ENCODE measurements at regions of chr3 and their contacts with region 1.

Region 1: GRCh38 chr3:100047455-100048141 is 66.7 kb downstream of the FILIP1L start:
- DNase-seq: peak; percentile 22 to 41
- ATAC-seq: peak; percentile 93

Region 2: DNA sequence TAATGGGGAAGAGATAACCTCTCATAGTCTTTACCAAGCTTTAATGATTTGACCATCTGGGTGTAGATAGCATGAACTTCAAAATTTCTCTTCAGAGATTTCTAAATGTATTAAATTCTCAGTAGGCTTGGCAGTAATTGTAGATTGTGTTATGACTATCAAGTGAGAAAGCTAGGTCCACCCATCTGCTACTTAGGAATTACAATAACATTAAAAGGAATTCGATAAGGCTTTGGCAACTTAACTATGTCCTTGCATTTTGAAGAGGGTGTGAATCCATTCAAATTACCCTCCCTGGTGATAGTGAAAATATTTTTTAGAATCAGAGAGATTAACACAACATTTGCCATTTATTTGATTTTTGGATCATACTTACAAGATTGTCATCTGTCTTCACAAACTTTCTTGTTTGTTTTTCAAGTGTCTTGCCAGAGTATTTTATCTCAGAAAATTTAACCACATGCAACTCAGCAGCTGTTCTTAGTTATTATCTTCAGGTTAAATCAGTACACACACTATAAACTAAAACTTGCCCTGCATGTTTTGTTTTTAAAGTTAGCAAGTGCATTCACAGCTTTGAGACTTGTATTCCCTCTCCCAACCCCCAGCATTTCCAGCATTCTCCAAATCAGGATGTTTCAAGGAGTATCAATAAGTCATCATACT is 478.8 kb before region 1 on chr3:
- intact Hi-C with region 1: no loop called
- DNase-seq: no peak
- ATAC-seq: no peak

Region 3: GRCh38 chr3:99789011-99789721 is 258.4 kb before region 1 on chr3:
- intact Hi-C with region 1: no loop called
- DNase-seq: no peak
- ATAC-seq: peak; percentile 65

Region 4: DNA sequence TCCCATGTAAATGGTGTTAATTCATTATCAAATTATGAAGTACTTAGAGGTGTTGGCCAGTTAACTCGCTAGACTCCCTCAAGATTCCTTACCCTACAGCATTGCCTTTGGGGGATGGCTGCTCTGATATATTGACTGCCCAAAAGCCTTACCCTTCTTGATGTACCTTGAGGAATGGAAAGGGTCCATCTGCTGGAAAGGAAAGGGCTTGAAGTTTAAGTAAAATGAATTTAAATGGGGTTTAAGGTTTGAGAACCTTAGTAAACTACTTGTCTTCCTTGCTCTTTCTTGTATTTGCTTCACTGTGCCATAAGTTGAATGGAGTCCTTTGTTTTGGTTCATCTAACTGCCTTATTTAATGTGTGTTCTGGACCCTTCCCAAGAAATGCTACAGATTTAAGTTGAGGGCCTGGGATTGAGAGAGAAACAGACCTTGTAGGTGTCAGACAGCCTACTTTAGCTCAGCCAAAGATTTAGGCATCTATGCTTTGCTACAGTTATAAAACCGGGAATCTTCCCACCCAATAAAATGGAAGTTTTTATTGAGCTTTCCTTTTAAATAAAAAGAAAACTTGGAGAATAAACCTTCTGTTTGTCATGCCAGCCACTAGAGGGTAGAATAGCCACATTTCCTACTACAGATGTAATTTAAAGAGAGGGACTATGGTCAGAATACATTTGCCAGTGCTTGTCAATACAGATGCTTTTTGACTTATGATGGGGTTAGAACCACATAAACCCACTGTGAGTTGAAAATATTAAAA is 204.6 kb before region 1 on chr3:
- intact Hi-C with region 1: loop called in 1 of 2 experiments (anchors 10 kb)
- DNase-seq: no peak
- ATAC-seq: peak; percentile 91

Region 5: DNA sequence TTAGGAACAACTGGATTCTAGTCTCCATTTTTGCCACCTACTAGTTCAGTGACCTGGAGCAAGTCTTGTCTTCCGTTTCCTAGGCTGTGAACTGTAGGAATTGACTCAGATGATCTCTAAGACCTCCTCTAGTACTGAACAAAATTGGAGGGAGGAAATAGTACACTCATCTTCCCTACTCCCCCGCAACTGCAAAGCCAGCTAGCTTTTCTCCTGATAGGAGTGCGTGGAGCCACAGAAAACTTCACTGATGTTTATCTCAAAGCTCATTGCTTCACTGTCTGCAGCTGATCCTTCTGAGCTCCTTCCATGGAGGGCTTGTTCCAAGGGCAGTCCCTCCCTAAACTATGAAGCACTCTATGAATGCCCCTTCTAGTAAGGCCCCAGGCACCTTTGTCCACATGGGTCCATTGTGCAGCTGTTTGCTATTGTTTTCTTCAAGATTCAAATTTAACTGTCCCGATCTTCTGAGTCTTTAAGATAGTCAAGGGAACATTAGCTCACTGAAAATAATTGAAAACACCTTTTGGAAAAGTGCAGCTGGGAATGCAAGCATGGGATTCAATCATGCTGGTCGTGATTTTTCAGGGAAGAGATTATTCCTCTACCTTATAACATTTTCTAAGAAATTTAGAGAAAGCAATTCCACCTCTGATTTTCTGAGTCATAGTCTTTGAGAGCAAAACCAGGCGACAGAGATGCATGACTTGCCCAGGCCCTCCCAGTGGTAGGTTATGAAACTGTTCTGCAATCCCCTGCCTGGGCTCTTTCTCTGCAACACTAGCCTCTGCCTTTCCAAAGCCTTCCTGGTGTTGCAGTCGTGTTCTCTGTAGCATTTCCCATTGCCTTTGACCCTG is 42.4 kb after region 1 on chr3:
- intact Hi-C with region 1: no loop called
- DNase-seq: no peak
- ATAC-seq: peak; percentile 75

Region 6: GRCh38 chr3:100352296-100353231 is 305.0 kb after region 1 on chr3:
- intact Hi-C with region 1: no loop called
- DNase-seq: no peak
- ATAC-seq: no peak